B cell (primary cell): ENCODE measurements at regions of chr6 and their contacts with region 1.

Region 1: GRCh38 chr6:131116749-131117360 is 18.4 kb upstream of the AKAP7 start:
- DNase-seq: peak; percentile 70
- ATAC-seq: peak; percentile 43
- H3K4me3 ChIP-seq: no peak overlapping the region
- H3K4me3 Mint-ChIP-seq: no peak overlapping the region
- H3K27ac ChIP-seq: no peak overlapping the region
- H3K27ac Mint-ChIP-seq: no peak overlapping the region
- H3K4me1 ChIP-seq: peaks cover 3 to 9% of the 10 kb centered on the region in 2 donors
- H3K4me1 Mint-ChIP-seq: peaks cover 11% of the 10 kb centered on the region
- H3K27me3 ChIP-seq: no peaks in the 10 kb centered on the region
- H3K27me3 Mint-ChIP-seq: no peaks in the 10 kb centered on the region
- CTCF ChIP-seq: peak; percentile 67

Region 2: DNA sequence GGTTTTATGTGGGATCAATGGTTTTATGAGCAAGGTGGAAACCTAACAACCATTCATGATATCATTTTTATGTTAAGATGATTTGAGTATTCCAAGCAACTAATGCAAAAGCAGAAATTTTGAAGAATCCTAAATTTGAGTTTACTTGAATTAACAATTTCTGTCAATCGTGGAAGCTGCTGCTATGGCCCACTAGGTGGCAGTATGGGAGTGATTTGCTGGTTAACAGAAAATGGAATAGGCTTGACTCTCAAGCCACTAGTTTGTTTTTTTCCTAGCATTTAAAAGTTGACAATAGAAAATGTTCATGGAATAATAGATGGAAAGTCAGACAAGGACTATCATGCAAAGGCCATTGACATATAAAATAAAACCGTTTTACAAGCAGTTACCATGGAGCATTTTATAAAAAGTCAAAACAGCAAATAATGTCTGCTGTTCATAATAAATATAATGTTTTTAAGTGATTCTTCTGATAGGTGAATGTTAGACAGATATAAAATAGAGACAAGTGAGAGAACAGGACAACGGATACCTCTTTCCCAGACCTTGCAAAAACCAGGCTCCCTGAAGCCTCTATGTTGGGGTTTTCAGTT is 794.1 kb before region 1 on chr6:
- CTCF ChIA-PET with region 1: interaction called, 3 read pairs
- POLR2A ChIA-PET with region 1: no interaction called
- intact Hi-C with region 1: loop called (anchors 2 kb)
- DNase-seq: peak; percentile 67
- ATAC-seq: no peak
- H3K4me3 ChIP-seq: no peak overlapping the region
- H3K4me3 Mint-ChIP-seq: no peak overlapping the region
- H3K27ac ChIP-seq: no peak overlapping the region
- H3K27ac Mint-ChIP-seq: no peak overlapping the region
- H3K4me1 ChIP-seq: no peaks in the 10 kb centered on the region
- H3K4me1 Mint-ChIP-seq: no peaks in the 10 kb centered on the region
- H3K27me3 ChIP-seq: no peaks in the 10 kb centered on the region
- H3K27me3 Mint-ChIP-seq: no peaks in the 10 kb centered on the region
- CTCF ChIP-seq: peak; percentile 95

Region 3: GRCh38 chr6:130872250-130873095 is 244.4 kb before region 1 on chr6:
- CTCF ChIA-PET with region 1: interaction called, 29 read pairs
- POLR2A ChIA-PET with region 1: no interaction called
- intact Hi-C with region 1: no loop called
- DNase-seq: peak; percentile 72
- ATAC-seq: peak; percentile 43
- H3K4me3 ChIP-seq: no peak overlapping the region
- H3K4me3 Mint-ChIP-seq: no peak overlapping the region
- H3K27ac ChIP-seq: no peak overlapping the region
- H3K27ac Mint-ChIP-seq: no peak overlapping the region
- H3K4me1 ChIP-seq: no peaks in the 10 kb centered on the region
- H3K4me1 Mint-ChIP-seq: no peaks in the 10 kb centered on the region
- H3K27me3 ChIP-seq: no peaks in the 10 kb centered on the region
- H3K27me3 Mint-ChIP-seq: no peaks in the 10 kb centered on the region
- CTCF ChIP-seq: peak; percentile 98

Region 4: GRCh38 chr6:131048933-131049515 is 67.8 kb before region 1 on chr6:
- CTCF ChIA-PET with region 1: no interaction called
- POLR2A ChIA-PET with region 1: no interaction called
- intact Hi-C with region 1: no loop called
- DNase-seq: no peak
- ATAC-seq: no peak
- H3K4me3 ChIP-seq: no peak overlapping the region
- H3K4me3 Mint-ChIP-seq: no peak overlapping the region
- H3K27ac ChIP-seq: no peak overlapping the region
- H3K27ac Mint-ChIP-seq: no peak overlapping the region
- H3K4me1 ChIP-seq: no peaks in the 10 kb centered on the region
- H3K4me1 Mint-ChIP-seq: peaks cover 2% of the 10 kb centered on the region
- H3K27me3 ChIP-seq: no peaks in the 10 kb centered on the region
- H3K27me3 Mint-ChIP-seq: no peaks in the 10 kb centered on the region
- CTCF ChIP-seq: no peak

Region 5: DNA sequence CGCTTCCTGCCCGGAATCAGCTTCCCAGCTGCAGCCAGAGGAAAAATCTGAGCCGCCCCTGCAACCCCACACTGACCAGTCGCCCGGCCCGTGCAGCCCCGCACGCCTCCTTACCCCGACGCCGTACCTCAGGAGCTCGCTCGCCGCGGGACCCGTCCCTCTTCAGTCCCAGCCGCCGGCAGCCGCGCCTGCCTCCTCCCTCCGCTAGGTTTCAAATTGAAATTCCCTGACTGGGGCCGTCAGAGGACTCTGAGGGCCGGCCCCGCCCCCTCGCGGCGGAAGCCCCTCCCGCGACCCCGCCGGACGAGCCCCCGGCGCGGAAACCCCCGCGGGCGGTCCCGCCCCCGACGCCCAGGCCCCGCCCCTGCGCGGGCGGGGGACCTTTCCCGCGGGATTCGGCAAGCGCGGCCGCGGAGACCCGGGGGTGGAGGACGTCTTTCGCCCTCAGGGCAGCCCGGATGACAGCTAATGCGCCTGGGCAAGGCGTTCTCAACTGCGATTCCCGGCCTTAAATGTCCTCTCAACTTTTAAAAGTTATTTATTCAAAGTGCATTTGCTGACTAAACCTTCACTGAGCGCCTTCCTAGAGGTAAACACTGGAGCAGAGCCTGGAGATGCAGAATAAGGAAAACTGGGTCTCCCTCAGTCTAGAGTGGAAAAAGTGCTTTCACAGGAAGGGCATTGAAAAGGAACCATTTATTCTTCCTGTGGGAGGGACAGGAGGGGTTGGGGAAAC is 53.7 kb before region 1 on chr6 and contains the start of gene EPB41L2:
- CTCF ChIA-PET with region 1: interaction called, 10 read pairs
- POLR2A ChIA-PET with region 1: no interaction called
- intact Hi-C with region 1: loop called (anchors 2 kb)
- DNase-seq: peak; percentile 93
- ATAC-seq: peak; percentile 89
- H3K4me3 ChIP-seq: peak within 1 kb of the TSS; percentile 73 to 94 (median 90)
- H3K4me3 Mint-ChIP-seq: peak within 1 kb of the TSS; percentile 92
- H3K27ac ChIP-seq: peak within 1 kb of the TSS; percentile 72 to 78
- H3K27ac Mint-ChIP-seq: peak within 1 kb of the TSS; percentile 81
- H3K4me1 ChIP-seq: peaks cover 27 to 32% of the 10 kb centered on the region in 2 donors
- H3K4me1 Mint-ChIP-seq: peaks cover 33% of the 10 kb centered on the region
- H3K27me3 ChIP-seq: no peaks in the 10 kb centered on the region
- H3K27me3 Mint-ChIP-seq: no peaks in the 10 kb centered on the region
- CTCF ChIP-seq: peak; percentile 31
- total RNA-seq, gene EPB41L2: 59.8 and 61.0 TPM in 2 replicates

Region 6: DNA sequence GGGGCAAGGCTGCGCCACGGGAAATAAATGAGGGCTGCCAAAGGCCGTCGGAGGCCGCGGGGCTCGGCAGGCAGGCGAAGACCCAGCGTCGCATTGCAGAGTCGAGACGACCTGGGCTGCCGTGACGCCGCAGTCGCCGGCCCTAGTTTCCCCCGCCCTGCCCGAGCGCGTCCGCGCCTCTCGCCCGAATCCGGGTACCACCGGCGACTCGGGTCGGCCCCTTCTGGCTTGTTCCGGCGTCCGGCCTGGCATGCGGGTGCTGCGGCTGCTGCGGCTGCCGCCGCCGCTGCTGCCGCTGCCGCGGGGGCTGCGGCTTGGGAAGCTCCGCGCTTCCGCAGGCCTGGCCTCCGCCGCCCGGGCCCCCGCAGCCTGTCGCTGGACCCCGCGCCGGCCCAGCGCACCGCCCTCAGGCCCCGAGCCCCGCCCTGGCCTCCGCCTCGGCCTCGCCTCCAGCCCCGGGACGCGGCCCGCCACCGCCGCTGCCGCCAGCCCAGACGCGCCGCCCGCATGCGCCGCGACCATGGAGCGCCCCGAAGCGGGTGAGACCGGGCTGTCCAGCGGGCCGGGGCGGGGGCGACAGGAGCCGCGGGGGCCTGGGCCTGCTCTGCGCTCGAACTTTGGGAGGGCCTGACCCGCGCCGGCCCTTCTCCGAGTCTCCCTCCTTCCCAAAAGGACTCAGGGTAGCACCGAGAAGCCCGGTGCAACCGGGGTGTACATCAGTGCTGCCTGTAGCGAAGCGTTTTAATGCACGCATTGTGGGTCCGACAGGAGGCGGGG is 18.6 kb after region 1 on chr6 and contains the start of gene AKAP7:
- CTCF ChIA-PET with region 1: interaction called, 8 read pairs
- POLR2A ChIA-PET with region 1: no interaction called
- intact Hi-C with region 1: loop called (anchors 2 kb)
- DNase-seq: peak; percentile 78
- ATAC-seq: peak; percentile 77
- H3K4me3 ChIP-seq: peak within 1 kb of the TSS; percentile 55 to 82 (median 76)
- H3K4me3 Mint-ChIP-seq: peak within 1 kb of the TSS; percentile 95
- H3K27ac ChIP-seq: peak within 1 kb of the TSS; percentile 66 to 78
- H3K27ac Mint-ChIP-seq: peak within 1 kb of the TSS; percentile 93
- H3K4me1 ChIP-seq: peaks cover 9 to 13% of the 10 kb centered on the region in 2 donors
- H3K4me1 Mint-ChIP-seq: peaks cover 23% of the 10 kb centered on the region
- H3K27me3 ChIP-seq: no peaks in the 10 kb centered on the region
- H3K27me3 Mint-ChIP-seq: no peaks in the 10 kb centered on the region
- CTCF ChIP-seq: no peak
- total RNA-seq, gene AKAP7: 8.3 and 10.8 TPM in 2 replicates

Region 7: GRCh38 chr6:131532580-131533039 is 415.8 kb after region 1 on chr6:
- CTCF ChIA-PET with region 1: interaction called, 19 read pairs
- POLR2A ChIA-PET with region 1: no interaction called
- intact Hi-C with region 1: loop called (anchors 2 kb)
- DNase-seq: no peak
- ATAC-seq: no peak
- H3K4me3 ChIP-seq: no peak overlapping the region
- H3K4me3 Mint-ChIP-seq: no peak overlapping the region
- H3K27ac ChIP-seq: no peak overlapping the region
- H3K27ac Mint-ChIP-seq: no peak overlapping the region
- H3K4me1 ChIP-seq: peaks cover 3% of the 10 kb centered on the region in 2 donors
- H3K4me1 Mint-ChIP-seq: peaks cover 5% of the 10 kb centered on the region
- H3K27me3 ChIP-seq: peaks cover 0 to 4% (median 0%) of the 10 kb centered on the region in 4 experiments
- H3K27me3 Mint-ChIP-seq: peaks cover 11% of the 10 kb centered on the region
- CTCF ChIP-seq: no peak